Astrocyte of the cerebellum (primary cell): ENCODE measurements at regions of chr6 and their contacts with region 1.

Region 1: DNA sequence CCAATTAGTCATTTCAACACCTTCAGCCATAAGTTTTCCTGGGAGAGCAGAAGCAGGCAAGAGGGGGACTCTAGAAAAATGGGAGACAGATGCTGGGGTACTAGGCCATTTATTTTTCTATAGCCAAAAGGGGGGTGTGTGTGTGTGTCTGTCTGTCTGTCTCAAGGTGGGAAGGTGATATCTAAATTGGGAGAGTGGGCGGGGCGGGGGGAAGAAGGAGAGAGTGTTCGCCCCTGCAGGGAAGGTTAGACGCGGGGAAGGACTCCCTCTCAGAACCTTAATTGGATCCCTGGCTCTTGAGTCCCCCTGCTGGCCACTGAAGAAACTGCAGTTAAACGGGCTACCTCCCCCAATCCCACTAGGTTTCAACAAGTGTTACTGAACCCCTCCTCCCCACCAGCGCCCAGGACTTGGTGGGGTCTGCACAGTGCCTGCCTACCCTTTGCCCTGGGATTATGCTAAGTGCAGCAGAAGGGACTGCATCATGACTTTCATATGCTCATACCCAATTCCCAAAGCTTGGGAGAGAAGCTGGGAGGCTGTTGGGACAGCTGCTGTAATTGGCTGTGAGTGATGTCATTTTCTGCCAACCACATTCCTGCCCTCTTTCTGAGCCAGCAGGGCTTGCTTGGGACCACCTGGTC is 45.8 kb downstream of the FOXP4 start:
- DNase-seq: peak; percentile 23
- H3K4me3 ChIP-seq: no peak overlapping the region
- CTCF ChIP-seq: peak; percentile 88

Region 2: GRCh38 chr6:41271901-41272395 is 320.0 kb before region 1 on chr6:
- in situ Hi-C with region 1: no loop called
- DNase-seq: no peak
- H3K4me3 ChIP-seq: no peak overlapping the region
- CTCF ChIP-seq: no peak

Region 3: DNA sequence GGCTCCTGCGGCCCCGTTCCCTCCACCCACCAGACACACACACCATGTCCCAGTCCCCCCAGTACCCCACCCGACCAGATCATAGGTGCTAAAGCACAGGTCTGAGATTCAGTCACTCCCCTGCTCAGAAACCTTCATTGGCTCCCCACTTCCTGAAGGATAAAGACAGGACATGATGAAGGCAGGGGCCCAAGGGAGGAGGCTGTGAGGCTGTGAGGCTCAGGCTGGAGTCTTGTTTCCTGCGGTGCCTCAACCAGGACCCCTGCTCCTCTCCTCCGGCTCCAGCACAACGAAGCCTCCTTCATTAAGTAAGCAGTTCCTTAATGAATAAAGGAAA is 175.5 kb before region 1 on chr6:
- in situ Hi-C with region 1: loop called (anchors 5 kb)
- DNase-seq: no peak
- H3K4me3 ChIP-seq: no peak overlapping the region
- CTCF ChIP-seq: no peak

Region 4: GRCh38 chr6:41655711-41656691 is 64.0 kb after region 1 on chr6:
- in situ Hi-C with region 1: loop called (anchors 5 kb)
- DNase-seq: no peak
- H3K4me3 ChIP-seq: no peak overlapping the region
- CTCF ChIP-seq: no peak